ENCODE measurements at regions of chr7 and their contacts with region 1.

Region 1: DNA sequence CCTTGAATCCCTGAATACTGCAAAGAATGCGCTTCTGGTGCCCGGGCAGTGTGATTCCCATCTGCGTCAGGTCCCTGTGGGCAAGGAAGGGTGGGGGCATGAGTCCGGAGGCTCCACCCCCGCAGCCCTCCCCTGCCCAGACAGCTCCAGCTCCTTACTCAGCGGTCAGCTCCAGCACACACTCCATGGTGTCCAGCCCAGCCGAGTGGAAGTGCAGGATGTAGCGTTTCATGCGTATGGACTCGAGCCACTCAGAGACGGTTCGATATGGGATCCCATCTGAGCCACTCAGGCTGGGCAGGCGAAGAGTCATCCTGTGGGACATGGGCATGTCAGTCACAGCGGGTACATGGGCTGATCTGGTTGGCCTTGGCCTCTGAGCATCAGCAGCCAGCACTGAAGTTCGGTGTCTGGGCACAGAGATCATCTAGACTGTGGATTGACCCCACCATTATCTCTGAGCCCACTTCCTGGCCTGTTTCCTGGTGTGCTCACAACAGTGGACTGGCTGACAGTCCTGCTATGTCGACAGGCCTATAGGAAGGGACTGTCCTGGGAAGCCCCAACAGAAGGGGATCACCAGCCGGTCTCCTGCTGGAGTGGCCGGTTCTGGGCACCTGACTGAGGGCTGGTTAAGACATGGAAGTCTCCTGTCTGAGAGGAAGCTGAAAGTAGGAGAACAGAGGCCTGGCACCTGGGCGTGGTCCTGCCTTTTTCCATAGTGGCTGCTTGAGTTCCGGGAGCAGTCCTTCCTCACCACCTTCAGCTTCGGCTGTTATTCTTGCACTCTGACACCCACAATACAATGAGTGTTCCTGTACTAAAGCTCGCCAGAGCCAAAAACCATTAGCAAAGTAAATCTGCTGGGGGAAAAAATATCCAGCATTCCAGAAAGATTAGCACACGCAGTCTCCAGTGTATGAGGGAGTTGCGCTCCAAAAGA is 10.6 kb downstream of the ZYX start:
- DNase-seq: no peak
- ATAC-seq: no peak
- H3K4me3 Mint-ChIP-seq: no peak overlapping the region
- H3K27ac Mint-ChIP-seq: no peak overlapping the region
- H3K4me1 Mint-ChIP-seq: peaks cover 19% of the 10 kb centered on the region
- H3K27me3 Mint-ChIP-seq: no peaks in the 10 kb centered on the region

Region 2: GRCh38 chr7:143408686-143409561 is 17.2 kb after region 1 on chr7 and contains the start of gene EPHA1:
- POLR2A ChIA-PET with region 1: interaction called, 40 read pairs
- DNase-seq: peak; percentile 45
- ATAC-seq: peak; percentile 71
- H3K4me3 Mint-ChIP-seq: peak within 1 kb of the TSS; percentile 89
- H3K27ac Mint-ChIP-seq: peak within 1 kb of the TSS; percentile 87
- H3K4me1 Mint-ChIP-seq: peaks cover 33% of the 10 kb centered on the region
- H3K27me3 Mint-ChIP-seq: peaks cover 2% of the 10 kb centered on the region
- total RNA-seq, gene EPHA1: 27.3 to 28.2 TPM